Heart right ventricle (tissue), 16 donors: ENCODE measurements at regions of chr17 and their contacts with region 1.

Region 1: DNA sequence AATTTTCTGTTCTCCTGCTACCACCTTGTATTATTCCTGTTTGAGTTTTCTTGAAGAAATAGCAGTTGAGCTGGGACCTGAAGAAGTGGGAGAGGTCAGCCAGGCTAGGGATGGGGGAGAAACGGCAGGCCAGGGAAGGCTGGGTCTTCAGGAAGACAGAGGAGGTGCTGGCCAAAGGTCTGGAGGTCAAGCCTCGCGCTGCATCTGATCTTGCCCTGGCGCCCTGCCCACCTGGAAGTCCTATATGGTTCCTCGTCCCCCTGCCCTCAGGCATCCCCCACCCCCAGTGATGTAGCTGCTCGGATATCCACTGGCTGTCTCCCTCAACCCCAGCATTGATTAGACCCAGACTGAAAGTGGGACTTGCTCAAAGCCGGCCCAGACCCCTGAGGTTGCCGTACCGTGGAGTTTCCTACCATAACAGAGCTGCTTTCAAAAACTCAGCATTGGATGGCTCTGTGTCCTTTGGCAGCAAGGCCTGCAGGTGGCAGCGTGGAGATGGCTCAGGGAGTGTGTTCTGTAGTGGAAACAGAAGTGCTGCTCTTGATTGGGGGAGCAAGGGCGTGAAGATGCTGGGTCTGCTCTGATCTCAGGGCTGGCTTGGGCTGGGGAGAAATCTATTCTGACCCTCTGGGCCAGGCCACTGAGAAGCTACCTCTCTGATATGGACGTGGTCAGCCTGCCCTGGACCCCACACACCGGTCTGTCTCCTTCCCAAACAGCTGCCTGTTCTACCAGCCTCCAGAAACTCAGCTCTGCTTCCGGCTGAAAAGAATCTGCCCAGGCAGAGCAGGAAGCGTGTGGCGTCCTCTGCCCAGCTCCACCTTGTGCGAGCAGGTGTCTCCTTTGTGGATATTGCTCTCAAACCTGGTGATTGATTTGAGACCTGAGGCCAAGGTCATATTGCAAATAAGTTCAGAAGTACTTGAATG is 107.0 kb upstream of the CACNG5 start:
- DNase-seq: peak; percentile 40 to 46
- ATAC-seq: peak; percentile 50 to 78 (median 70)
- H3K4me3 ChIP-seq: no peak overlapping the region
- H3K27ac ChIP-seq: no peak overlapping the region
- H3K4me1 ChIP-seq: peaks cover 3 to 21% (median 11%) of the 10 kb centered on the region in 9 donors
- H3K27me3 ChIP-seq: no peaks in the 10 kb centered on the region
- CTCF ChIP-seq: peak; percentile 8 to 65 (median 55)

Region 2: GRCh38 chr17:66123163-66123562 is 604.7 kb before region 1 on chr17:
- intact Hi-C with region 1: no loop called
- DNase-seq: no peak
- ATAC-seq: no peak
- H3K4me3 ChIP-seq: no peak overlapping the region
- H3K27ac ChIP-seq: no peak overlapping the region
- H3K4me1 ChIP-seq: no peaks in the 10 kb centered on the region
- H3K27me3 ChIP-seq: no peaks in the 10 kb centered on the region
- CTCF ChIP-seq: no peak

Region 3: GRCh38 chr17:66900126-66901010 is 172.5 kb after region 1 on chr17:
- intact Hi-C with region 1: loop called in 4 of 10 experiments (anchors 5 kb)
- DNase-seq: no peak
- ATAC-seq: no peak
- H3K4me3 ChIP-seq: no peak overlapping the region
- H3K27ac ChIP-seq: no peak overlapping the region
- H3K4me1 ChIP-seq: peaks cover 0 to 8% (median 7%) of the 10 kb centered on the region in 9 donors
- H3K27me3 ChIP-seq: peaks cover 0 to 37% (median 8%) of the 10 kb centered on the region in 7 donors
- CTCF ChIP-seq: peak in 6 of 9 donors; percentile 11 to 40 (median 22)

Region 4: DNA sequence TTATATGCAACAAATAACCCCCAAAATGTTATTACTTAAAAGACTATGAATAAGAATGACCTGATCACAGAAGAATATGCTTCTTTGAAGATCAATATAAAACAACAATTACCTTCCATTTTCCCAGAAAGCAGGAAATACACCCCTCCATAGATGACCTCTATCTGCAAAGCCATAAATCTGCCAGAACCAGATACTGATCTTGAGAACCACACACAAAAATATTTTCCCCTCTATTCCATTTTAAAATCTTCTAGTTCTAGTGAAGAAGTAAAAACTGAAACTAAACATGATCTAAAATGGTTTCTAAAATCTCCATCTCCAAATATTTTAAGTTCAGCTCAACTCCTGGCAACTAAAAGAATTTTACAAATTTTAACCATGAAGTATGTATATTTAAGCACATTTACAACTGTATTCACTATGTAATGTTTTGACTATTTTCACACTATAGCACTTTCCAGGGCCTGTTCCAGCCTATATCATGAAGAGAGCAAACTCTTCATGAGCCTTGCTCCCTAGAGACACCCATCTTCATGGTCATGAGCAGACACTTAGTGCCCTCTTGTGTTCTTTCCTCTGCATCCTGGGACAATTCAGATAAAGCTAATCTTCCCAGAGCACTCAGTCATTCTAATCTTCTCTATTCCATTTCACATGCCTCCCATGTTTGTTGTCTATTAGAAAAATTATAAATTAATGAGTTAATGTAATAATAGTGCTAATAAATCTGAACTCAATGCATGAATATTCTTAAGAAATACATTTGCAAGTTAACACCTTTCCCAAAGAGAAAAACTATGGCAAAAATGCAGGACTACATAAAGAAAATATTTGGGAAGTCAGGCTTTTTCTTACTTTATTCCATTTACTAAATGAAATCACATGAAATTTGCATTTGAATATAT is 430.1 kb after region 1 on chr17:
- intact Hi-C with region 1: loop called in 3 of 10 experiments (anchors 10 kb)
- DNase-seq: no peak
- ATAC-seq: peak in 5 of 8 donors; percentile 29 to 72 (median 57)
- H3K4me3 ChIP-seq: no peak overlapping the region
- H3K27ac ChIP-seq: no peak overlapping the region
- H3K4me1 ChIP-seq: peaks cover 0 to 11% (median 0%) of the 10 kb centered on the region in 9 donors
- H3K27me3 ChIP-seq: no peaks in the 10 kb centered on the region
- CTCF ChIP-seq: peak in 7 of 9 donors; percentile 15 to 47 (median 40)

Region 5: DNA sequence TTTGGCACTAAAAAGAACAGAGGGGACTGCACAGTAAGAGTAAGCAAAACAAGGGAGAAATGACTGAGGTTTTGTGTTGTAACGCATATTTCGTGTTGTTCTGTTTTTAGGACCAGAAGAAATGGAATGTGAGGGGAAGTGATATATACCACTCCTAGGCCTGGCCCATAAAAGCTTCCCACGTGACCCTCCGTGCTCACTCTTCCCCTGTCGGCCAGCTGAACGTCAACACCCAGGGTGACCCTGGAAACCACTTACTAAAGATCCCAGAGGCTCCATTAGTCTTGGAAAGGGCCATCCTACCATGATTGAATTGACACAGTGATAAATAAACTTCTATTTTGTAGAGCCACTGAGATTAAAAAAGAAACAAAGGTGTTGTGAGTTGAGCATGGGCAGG is 437.3 kb after region 1 on chr17:
- intact Hi-C with region 1: loop called in 1 of 10 experiments (anchors 10 kb)
- DNase-seq: peak; percentile 16 to 23
- ATAC-seq: peak in 7 of 8 donors; percentile 67 to 87 (median 81)
- H3K4me3 ChIP-seq: no peak overlapping the region
- H3K27ac ChIP-seq: peak overlapping the region in 2 of 10 donors; percentile 47 to 66
- H3K4me1 ChIP-seq: peaks cover 0 to 19% (median 6%) of the 10 kb centered on the region in 9 donors
- H3K27me3 ChIP-seq: no peaks in the 10 kb centered on the region
- CTCF ChIP-seq: no peak